ENCODE measurements at regions of chr1 and their contacts with region 1.

Region 1: DNA sequence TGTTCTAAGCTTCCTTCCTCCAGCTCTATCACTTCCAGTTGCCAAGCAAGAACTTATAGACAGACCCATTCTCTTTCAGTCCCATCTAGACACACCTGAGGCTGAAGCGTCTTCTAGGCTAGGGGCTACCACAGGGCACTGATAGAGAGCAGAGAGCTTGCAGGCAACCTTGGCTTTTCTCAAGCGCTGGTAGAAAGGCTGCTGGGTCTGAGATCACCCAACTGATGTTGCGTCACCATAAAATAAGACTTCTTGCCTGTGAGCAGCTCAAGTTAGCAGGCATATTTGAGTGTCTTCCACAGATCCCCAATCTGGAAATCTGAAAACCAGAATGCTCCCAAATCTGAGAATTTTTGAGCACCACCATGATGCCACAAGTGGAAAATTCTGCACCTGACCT is 132.5 kb downstream of the PBX1 start:
- DNase-seq: no peak
- ATAC-seq: no peak
- H3K4me3 ChIP-seq: no peak overlapping the region
- H3K27ac ChIP-seq: 0 out of 6 replicates have a peak overlapping the region, but pooled peaks of 1 of the 2 experiments have one; percentile 16
- H3K4me1 ChIP-seq: peaks cover 4% of the 10 kb centered on the region; the same call in 1 of the 3 replicates
- CTCF ChIP-seq: no peak
- EP300 ChIP-seq: no peak
- POLR2A ChIP-seq: no peak
- RAD21 ChIP-seq: no peak

Region 2: GRCh38 chr1:164779376-164779775 is 87.9 kb after region 1 on chr1:
- CTCF ChIA-PET with region 1: no interaction called
- POLR2A ChIA-PET with region 1: interaction called, 11 read pairs
- DNase-seq: no peak
- ATAC-seq: no peak
- H3K4me3 ChIP-seq: no peak overlapping the region
- H3K27ac ChIP-seq: peak overlapping the region; percentile 89 to 94; a peak in 5 of 6 replicates
- H3K4me1 ChIP-seq: peaks cover 67% of the 10 kb centered on the region
- CTCF ChIP-seq: no peak
- EP300 ChIP-seq: no peak
- POLR2A ChIP-seq: no peak
- RAD21 ChIP-seq: no peak

Measured in A549 (cell line).